OCI-LY7 (cell line): ENCODE measurements at regions of chr18 and their contacts with region 1.

Region 1: DNA sequence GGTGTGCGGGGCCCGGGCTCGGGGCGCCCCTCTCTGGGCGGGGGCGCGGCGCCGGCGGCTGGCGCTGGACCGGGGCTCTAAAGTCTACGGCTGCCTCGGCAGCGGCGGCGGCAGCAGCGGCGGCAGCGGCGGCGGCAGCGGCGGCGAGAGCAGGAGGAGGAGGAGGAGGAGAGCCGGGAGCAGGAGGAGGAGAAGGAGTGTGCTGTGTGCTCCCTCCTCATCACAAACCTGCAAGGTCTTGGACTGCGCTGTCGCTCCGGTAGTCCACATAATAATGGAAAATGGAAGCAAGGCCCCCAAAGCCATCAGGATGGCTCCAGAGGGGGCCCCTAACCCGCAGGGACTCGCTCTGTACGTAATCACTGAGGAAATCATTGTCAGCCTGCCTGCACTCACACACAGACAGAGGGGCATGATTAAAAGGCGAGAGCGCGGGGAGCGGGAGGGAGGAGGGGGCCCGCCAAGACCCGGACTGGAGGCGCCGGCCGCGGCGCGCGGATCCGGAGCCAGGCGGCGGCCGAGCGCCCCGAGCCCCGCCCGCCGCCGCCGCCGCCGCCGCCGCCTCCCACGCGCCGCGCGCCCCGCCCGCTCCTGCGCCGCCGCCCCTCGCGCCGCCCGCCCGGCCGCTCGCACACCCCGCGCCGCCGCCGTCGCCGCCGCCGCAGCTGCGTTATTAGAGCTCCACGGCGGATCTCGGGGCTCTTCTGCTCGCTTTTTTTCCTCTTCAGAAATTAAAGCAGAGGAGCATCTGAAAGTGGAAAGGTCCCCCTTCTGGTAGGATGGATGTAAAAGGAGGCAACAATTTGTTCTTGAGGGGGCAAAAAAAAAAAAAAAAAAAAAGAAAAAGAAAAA is at the start of gene ZNF521:
- DNase-seq: peak; percentile 80
- H3K4me3 ChIP-seq: peak within 1 kb of the TSS; percentile 71
- H3K27ac ChIP-seq: no peak within 1 kb of the TSS
- H3K4me1 ChIP-seq: peaks cover 19% of the 10 kb centered on the region
- CTCF ChIP-seq: 0 out of 2 replicates have a peak, but pooled peaks have one; percentile 4
- total RNA-seq, gene ZNF521: 0.18 and 0.85 TPM in 2 replicates

Region 2: DNA sequence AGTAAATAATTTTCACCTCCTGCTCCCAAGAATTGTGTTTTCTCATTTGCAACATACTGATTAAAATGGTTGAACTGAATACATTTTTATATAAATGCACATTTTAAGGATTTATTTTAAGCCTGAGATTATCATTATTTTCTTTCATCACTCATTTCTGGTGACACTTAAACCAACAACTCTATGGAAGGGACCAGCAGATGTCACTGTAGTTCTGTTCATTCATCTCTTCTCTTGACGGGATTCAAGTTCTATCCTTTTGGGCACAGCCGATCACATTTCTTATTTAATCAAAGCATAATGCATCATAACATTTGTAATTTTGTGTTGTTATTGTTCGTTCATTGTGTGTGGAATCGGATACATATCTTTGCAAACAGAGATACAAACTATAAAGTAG is 473.7 kb before region 1 on chr18:
- CTCF ChIA-PET with region 1: no interaction called
- POLR2A ChIA-PET with region 1: no interaction called
- intact Hi-C with region 1: loop called (anchors 5 kb)
- DNase-seq: peak; percentile 61
- H3K4me3 ChIP-seq: no peak overlapping the region
- H3K27ac ChIP-seq: no peak overlapping the region
- H3K4me1 ChIP-seq: no peaks in the 10 kb centered on the region
- CTCF ChIP-seq: peak; percentile 92

Region 3: DNA sequence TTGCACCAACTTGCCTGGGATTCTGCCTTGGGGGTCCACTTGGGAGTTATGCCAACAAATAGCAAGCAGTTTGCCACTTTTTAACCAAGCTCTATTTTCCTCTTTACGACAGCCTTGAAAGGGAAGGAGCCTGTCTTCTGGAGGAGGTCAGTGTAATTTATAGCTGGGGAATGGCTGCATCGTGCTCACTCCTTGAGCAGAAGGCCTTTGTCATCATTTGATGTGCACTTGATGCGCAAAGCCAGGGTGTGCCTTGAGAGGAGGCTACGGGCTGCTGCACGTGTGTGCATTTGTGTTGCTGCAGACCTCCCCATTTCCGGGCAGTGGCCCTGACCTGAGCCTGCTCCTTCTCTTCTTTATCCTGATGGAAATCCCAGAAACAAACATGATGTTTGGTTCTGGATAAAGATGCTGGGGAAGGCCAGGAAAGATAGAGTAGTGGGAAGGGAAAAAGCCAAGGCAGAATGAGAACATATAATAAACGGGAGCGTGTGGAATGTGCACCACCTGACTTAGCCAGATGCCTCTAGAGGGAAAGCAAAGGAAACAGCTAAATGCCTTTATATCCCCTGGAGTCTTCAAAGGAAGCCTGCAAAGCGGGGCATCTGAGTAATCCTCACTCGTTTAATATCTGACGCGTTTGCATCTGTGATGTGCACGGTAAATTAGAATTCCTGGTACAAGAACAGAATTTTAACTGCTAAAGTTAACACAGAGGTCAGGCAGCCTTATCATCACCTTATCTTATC is 68.2 kb after region 1 on chr18:
- CTCF ChIA-PET with region 1: no interaction called
- POLR2A ChIA-PET with region 1: no interaction called
- intact Hi-C with region 1: no loop called
- DNase-seq: no peak
- H3K4me3 ChIP-seq: no peak overlapping the region
- H3K27ac ChIP-seq: no peak overlapping the region
- H3K4me1 ChIP-seq: no peaks in the 10 kb centered on the region
- CTCF ChIP-seq: no peak

Region 4: DNA sequence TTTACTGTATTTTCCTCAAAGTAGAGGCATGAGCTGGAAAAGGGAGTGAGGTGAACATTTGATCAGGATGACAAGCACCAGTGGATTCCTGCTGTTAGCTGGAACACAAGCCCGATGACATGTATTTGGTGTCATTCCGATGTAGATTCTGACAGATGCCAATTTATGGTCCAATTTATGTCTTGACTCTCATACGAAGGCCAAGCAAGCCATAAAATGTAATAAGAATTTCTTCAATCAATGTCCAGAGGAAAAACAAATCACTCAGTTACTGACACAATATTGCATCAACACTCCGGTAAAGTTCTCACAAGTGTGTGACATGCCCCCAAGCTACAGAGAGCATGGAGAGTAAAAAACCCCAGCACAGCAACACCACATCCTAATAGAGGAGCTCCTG is 138.3 kb after region 1 on chr18:
- CTCF ChIA-PET with region 1: no interaction called
- POLR2A ChIA-PET with region 1: no interaction called
- intact Hi-C with region 1: no loop called
- DNase-seq: no peak
- H3K4me3 ChIP-seq: no peak overlapping the region
- H3K27ac ChIP-seq: no peak overlapping the region
- H3K4me1 ChIP-seq: no peaks in the 10 kb centered on the region
- CTCF ChIP-seq: no peak

Region 5: DNA sequence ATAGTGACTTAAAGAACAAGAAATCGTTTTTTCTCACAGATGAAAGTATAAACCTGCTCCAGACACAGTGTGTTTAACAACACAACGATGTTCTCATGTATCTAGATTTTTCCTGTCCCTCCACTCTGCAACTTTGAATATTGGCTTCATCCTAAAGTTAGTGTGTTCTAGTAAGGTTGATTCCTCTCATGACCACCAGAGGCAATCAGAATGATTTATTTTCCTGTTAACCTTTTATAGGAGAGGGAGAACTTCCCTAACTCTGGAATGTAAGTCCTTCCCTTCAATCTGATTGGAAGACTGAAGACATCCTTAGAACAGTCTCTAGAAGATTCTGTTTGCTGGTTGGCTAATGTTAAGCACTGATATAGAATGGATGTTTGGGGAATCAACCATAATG is 833.3 kb after region 1 on chr18:
- CTCF ChIA-PET with region 1: no interaction called
- POLR2A ChIA-PET with region 1: no interaction called
- intact Hi-C with region 1: no loop called
- DNase-seq: no peak
- H3K4me3 ChIP-seq: no peak overlapping the region
- H3K27ac ChIP-seq: no peak overlapping the region
- H3K4me1 ChIP-seq: peaks cover 60% of the 10 kb centered on the region
- CTCF ChIP-seq: peak; percentile 75